WTC11 (cell line): ENCODE measurements at regions of chr17 and their contacts with region 1.

Region 1: DNA sequence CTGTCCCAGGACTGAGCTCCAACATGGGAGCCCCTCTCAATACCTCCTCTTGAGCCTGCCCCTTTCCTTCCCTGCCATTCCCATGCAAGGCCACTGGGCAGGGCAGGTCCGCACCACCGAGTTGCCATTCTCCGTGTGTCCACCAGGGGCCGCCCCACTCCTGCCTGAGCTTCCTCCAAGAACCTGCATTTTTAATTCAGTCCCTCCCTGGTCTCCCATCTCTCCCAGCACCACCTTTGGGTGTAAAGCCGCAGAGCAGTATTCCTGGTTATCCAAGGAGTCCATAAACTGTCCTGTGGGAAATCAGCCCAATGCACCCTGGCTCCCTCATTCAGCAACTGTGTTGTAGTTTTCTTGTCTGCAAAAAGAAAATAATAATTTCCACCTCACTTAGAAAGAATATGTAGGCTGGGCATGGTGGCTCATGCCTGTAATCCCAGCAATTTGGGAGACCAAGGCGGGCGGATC is 15.9 kb upstream of the ANKRD40CL start:
- DNase-seq: peak; percentile 95
- ATAC-seq: peak; percentile 99
- H3K4me3 Mint-ChIP-seq: no peak overlapping the region
- H3K27ac Mint-ChIP-seq: no peak overlapping the region
- H3K4me1 Mint-ChIP-seq: peaks cover 6% of the 10 kb centered on the region; the same call in 1 of the 2 replicates
- H3K27me3 Mint-ChIP-seq: no peaks in the 10 kb centered on the region
- CTCF ChIP-seq: peak; percentile 99

Region 2: GRCh38 chr17:50758989-50759544 is 24.2 kb before region 1 on chr17:
- CTCF ChIA-PET with region 1: interaction called, 70 read pairs
- POLR2A ChIA-PET with region 1: no interaction called
- DNase-seq: no peak
- ATAC-seq: no peak
- H3K4me3 Mint-ChIP-seq: no peak overlapping the region
- H3K27ac Mint-ChIP-seq: peak overlapping the region; percentile 0; the same call in 1 of the 2 replicates
- H3K4me1 Mint-ChIP-seq: peaks cover 9% of the 10 kb centered on the region
- H3K27me3 Mint-ChIP-seq: no peaks in the 10 kb centered on the region; the same call in 1 of the 2 replicates
- CTCF ChIP-seq: no peak

Region 3: GRCh38 chr17:50798424-50799288 is 15.4 kb after region 1 on chr17:
- CTCF ChIA-PET with region 1: interaction called, 28 read pairs
- POLR2A ChIA-PET with region 1: interaction called, 3 read pairs
- DNase-seq: no peak
- ATAC-seq: peak; percentile 48
- H3K4me3 Mint-ChIP-seq: no peak overlapping the region
- H3K27ac Mint-ChIP-seq: peak overlapping the region; percentile 68; the same call in 1 of the 2 replicates
- H3K4me1 Mint-ChIP-seq: peaks cover 18% of the 10 kb centered on the region
- H3K27me3 Mint-ChIP-seq: no peaks in the 10 kb centered on the region
- CTCF ChIP-seq: no peak

Region 4: GRCh38 chr17:50828508-50829170 is 45.4 kb after region 1 on chr17:
- CTCF ChIA-PET with region 1: interaction called, 52 read pairs
- POLR2A ChIA-PET with region 1: no interaction called
- DNase-seq: no peak
- ATAC-seq: no peak
- H3K4me3 Mint-ChIP-seq: no peak overlapping the region
- H3K27ac Mint-ChIP-seq: peak overlapping the region; percentile 72; the same call in 1 of the 2 replicates
- H3K4me1 Mint-ChIP-seq: peaks cover 39% of the 10 kb centered on the region
- H3K27me3 Mint-ChIP-seq: no peaks in the 10 kb centered on the region
- CTCF ChIP-seq: no peak

Region 5: GRCh38 chr17:50853015-50853615 is 69.9 kb after region 1 on chr17:
- CTCF ChIA-PET with region 1: interaction called, 33 read pairs
- POLR2A ChIA-PET with region 1: no interaction called
- DNase-seq: no peak
- ATAC-seq: no peak
- H3K4me3 Mint-ChIP-seq: no peak overlapping the region
- H3K27ac Mint-ChIP-seq: peak overlapping the region; percentile 3; the same call in 1 of the 2 replicates
- H3K4me1 Mint-ChIP-seq: peaks cover 11% of the 10 kb centered on the region
- H3K27me3 Mint-ChIP-seq: no peaks in the 10 kb centered on the region; the same call in 1 of the 2 replicates
- CTCF ChIP-seq: no peak

Region 6: GRCh38 chr17:50944054-50944901 is 161.1 kb after region 1 on chr17:
- CTCF ChIA-PET with region 1: interaction called, 33 read pairs
- POLR2A ChIA-PET with region 1: no interaction called
- DNase-seq: peak; percentile 65
- ATAC-seq: peak; percentile 59
- H3K4me3 Mint-ChIP-seq: peak overlapping the region; percentile 54
- H3K27ac Mint-ChIP-seq: no peak overlapping the region
- H3K4me1 Mint-ChIP-seq: peaks cover 24% of the 10 kb centered on the region
- H3K27me3 Mint-ChIP-seq: peaks cover 15% of the 10 kb centered on the region
- CTCF ChIP-seq: no peak